ENCODE measurements at regions of chr6 and their contacts with region 1.

Region 1: DNA sequence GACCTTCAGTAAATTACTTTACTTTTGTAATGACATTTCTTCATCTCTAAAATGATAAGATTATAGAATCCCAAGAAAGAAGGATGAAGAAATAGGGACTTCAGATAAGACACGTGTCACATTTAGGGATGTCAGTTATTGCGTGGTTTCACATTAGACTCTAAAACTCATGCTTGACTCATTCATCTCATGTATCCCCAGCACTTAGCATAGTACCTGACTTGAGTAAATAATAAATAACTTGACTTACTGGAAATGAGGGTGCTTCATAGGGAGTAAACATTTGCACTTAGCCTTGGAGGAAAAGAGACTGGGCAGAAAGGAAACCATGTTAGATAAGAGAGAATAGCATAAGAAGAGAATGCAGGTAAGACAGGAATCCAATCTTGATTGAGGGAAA is 37.2 kb downstream of the VTA1 start:
- DNase-seq: no peak
- ATAC-seq: no peak
- H3K4me3 Mint-ChIP-seq: no peak overlapping the region
- H3K27ac Mint-ChIP-seq: no peak overlapping the region
- H3K4me1 Mint-ChIP-seq: peaks cover 4% of the 10 kb centered on the region
- H3K27me3 Mint-ChIP-seq: no peaks in the 10 kb centered on the region
- CTCF ChIP-seq: no peak

Region 2: DNA sequence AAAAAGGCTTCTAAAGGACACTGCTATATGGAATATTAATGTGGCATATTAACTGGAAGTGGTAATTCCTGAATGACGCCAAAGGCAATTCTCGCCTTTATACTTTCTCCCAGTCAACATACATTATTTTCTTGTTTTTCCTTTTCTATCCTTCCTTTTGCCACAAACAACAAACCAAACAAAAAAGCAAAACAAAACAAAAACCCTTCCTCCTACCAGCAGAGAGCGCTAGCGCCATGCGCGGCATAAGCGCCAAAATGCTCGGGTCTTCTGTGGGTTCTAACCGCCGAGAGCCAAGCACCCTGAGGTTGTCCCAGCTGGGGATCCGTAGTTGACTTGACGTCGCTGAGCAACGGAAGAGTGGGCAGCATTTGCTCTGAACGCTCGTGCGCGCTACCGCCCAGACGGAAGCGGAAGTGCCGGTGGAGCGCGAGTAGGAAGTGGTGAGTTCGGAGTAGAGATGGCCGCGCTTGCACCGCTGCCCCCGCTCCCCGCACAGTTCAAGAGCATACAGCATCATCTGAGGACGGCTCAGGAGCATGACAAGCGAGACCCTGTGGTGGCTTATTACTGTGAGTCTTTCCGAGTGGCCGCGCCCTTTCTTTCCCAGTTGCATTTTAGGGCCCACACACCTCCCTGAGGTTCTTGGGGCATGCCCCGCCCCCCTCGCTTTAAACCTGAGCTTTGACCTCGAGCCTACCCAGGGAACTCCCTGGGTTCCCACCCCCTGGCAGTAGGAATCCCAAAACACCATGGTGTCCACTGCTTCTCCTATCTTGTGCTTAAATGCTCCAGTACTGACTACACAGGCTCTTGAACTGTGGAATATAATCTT is 37.3 kb before region 1 on chr6 and contains the starts of genes NMBR and VTA1:
- CTCF ChIA-PET with region 1: no interaction called
- POLR2A ChIA-PET with region 1: no interaction called
- intact Hi-C with region 1: no loop called
- DNase-seq: peak; percentile 90
- ATAC-seq: peak; percentile 96
- H3K4me3 Mint-ChIP-seq: peak within 1 kb of the TSS; percentile 96
- H3K27ac Mint-ChIP-seq: peak within 1 kb of the TSS; percentile 78
- H3K4me1 Mint-ChIP-seq: peaks cover 54% of the 10 kb centered on the region
- H3K27me3 Mint-ChIP-seq: no peaks in the 10 kb centered on the region
- CTCF ChIP-seq: peak; percentile 16
- total RNA-seq, gene NMBR: not detected in 2 replicates
- total RNA-seq, gene VTA1: 30.3 and 30.4 TPM in 2 replicates

Region 3: GRCh38 chr6:142171351-142171750 is 13.0 kb before region 1 on chr6:
- CTCF ChIA-PET with region 1: no interaction called
- POLR2A ChIA-PET with region 1: no interaction called
- intact Hi-C with region 1: loop called (anchors 2 kb)
- DNase-seq: no peak
- ATAC-seq: no peak
- H3K4me3 Mint-ChIP-seq: no peak overlapping the region
- H3K27ac Mint-ChIP-seq: no peak overlapping the region
- H3K4me1 Mint-ChIP-seq: no peaks in the 10 kb centered on the region
- H3K27me3 Mint-ChIP-seq: no peaks in the 10 kb centered on the region
- CTCF ChIP-seq: no peak

Region 4: DNA sequence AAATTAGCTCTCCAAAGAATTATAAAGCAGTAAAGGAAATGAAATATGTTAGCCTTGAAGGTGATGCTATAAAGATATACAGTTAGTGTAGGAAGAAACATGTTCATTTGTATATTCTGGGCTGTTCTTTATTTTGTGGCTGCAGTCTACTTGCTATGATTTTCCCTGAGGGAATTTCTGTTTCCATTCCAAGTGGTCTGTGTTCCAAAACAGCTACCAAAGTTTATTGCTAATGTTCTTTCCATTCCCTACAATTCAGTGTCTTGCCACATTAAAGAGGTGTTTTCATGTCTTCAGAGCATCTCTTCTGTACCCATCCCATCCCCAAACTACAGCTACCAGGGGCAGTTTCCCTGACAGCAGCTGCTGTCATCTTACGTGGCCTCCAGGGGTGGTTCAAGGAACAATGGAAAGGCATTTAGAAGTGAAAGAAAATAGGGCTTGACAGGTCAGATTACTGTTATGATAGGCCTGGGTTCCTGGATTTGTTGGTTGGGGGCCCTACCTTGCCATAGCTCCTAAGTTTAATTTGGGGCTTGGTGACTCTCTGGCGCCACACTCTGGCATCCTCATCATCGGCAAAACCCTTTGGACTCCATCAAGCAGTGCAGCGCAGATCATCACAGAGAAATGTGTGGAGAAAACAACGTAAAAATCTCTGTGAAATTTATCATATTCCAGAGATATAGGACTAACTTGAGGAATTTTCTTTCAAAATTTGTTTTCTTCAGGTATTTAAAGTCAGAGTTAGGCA is 842.6 kb after region 1 on chr6:
- CTCF ChIA-PET with region 1: no interaction called
- POLR2A ChIA-PET with region 1: no interaction called
- intact Hi-C with region 1: no loop called
- DNase-seq: peak; percentile 26
- ATAC-seq: peak; percentile 68
- H3K4me3 Mint-ChIP-seq: no peak overlapping the region
- H3K27ac Mint-ChIP-seq: no peak overlapping the region
- H3K4me1 Mint-ChIP-seq: peaks cover 5% of the 10 kb centered on the region
- H3K27me3 Mint-ChIP-seq: no peaks in the 10 kb centered on the region
- CTCF ChIP-seq: no peak